Vagina (tissue), 2 donors: ENCODE measurements at regions of chr5 and their contacts with region 1.

Region 1: DNA sequence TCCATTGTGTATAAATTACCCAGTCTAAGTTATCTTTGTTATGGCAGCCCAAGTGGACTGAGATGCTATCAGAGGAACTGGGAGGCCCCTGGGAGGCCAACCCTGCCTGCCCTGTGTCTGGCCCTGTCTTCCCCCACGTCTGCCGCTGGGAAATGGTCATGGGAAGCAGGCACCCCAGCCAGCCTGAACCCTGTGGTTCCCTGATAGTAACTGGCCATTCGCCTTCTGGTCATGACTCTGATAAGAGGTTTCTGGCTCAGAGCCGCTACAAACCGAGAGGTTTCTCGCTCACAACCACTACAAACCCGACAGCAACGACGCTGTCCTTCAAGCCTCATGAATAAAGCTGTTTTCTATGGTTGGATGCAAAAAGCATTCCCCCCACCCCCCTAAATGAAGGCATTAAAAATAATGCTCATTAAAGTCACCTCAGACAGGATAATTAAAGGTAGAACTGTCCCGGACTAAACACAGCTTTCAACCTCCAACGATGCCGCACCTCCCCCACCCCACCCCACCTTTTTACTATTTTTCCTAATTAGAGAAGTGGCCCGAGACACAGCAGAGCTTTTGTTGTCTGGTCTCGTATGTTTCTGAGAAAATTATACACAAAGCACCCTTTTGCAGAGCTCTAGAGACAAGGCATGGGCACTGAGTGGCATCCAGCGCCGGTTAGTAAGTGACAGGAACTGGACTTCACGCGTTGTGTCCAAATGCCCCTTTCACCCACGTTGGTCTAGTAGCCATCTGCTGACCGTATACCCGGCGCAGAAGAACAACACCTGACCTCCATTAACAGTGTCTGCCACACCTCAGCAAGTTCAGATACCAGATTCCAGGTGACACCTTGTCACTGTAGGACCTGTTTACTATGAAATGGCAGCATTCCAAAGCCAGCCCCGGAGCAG is 140.8 kb downstream of the COL23A1 start:
- DNase-seq: peak; percentile 27 to 82
- H3K4me3 ChIP-seq: no peak overlapping the region
- H3K27ac ChIP-seq: no peak overlapping the region
- H3K4me1 ChIP-seq: no peaks in the 10 kb centered on the region
- H3K27me3 ChIP-seq: no peaks in the 10 kb centered on the region
- CTCF ChIP-seq: no peak
- POLR2A ChIP-seq: no peak

Region 2: GRCh38 chr5:177327539-177328522 is 1121.6 kb before region 1 on chr5:
- intact Hi-C with region 1: no loop called
- DNase-seq: no peak
- H3K4me3 ChIP-seq: no peak overlapping the region
- H3K27ac ChIP-seq: no peak overlapping the region
- H3K4me1 ChIP-seq: peaks cover 5% of the 10 kb centered on the region
- H3K27me3 ChIP-seq: no peaks in the 10 kb centered on the region
- CTCF ChIP-seq: no peak
- POLR2A ChIP-seq: no peak

Region 3: GRCh38 chr5:177349762-177350161 is 1099.7 kb before region 1 on chr5:
- intact Hi-C with region 1: loop called (anchors 10 kb)
- DNase-seq: no peak
- H3K4me3 ChIP-seq: peak overlapping the region; percentile 68 to 99
- H3K27ac ChIP-seq: no peak overlapping the region
- H3K4me1 ChIP-seq: peaks cover 53% of the 10 kb centered on the region
- H3K27me3 ChIP-seq: no peaks in the 10 kb centered on the region
- CTCF ChIP-seq: no peak
- POLR2A ChIP-seq: no peak

Region 4: GRCh38 chr5:178642351-178642971 is 193.0 kb after region 1 on chr5:
- intact Hi-C with region 1: no loop called
- DNase-seq: no peak
- H3K4me3 ChIP-seq: no peak overlapping the region
- H3K27ac ChIP-seq: no peak overlapping the region
- H3K4me1 ChIP-seq: peaks cover 6% of the 10 kb centered on the region
- H3K27me3 ChIP-seq: no peaks in the 10 kb centered on the region
- CTCF ChIP-seq: no peak
- POLR2A ChIP-seq: no peak